CD4-positive, alpha-beta memory T cell (primary cell): ENCODE measurements at regions of chr7 and their contacts with region 1.

Region 1: DNA sequence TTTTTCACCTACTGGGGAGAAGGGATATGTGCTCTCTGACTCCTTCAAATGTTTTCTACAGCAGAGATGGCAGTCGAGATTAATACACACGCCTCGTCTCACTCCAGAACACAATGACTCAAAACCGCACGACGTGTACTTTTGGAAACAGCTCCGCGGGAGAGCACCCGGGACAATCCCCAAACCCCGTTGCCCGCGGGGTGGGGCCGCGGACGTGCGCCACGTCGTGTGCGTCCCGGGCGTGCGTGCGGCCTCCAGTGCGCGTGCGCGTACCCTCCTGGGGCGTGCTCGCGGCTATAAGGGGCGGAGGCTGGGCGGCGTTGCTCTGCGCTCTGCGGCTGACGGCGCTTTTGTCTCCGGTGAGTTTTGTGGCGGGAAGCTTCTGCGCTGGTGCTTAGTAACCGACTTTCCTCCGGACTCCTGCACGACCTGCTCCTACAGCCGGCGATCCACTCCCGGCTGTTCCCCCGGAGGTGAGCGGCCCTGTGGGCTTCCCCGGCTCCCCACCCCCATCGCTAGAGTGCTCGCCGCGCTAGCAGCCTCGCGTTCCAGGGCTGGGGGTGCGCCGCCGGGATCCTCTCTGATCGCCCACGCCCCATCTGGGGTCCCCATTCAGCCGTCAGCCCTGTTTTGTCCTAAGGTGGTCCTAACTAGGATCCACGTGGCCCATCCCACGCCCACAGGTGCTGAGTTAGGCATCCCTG is at the start of gene HILPDA:
- DNase-seq: peak; percentile 92 to 97 (median 94)
- H3K4me3 ChIP-seq: peak within 1 kb of the TSS; percentile 70 to 89
- H3K4me3 Mint-ChIP-seq: peak within 1 kb of the TSS; percentile 86 to 97 (median 94)
- H3K27ac ChIP-seq: peak within 1 kb of the TSS; percentile 76
- H3K27ac Mint-ChIP-seq: peak within 1 kb of the TSS; percentile 84 to 98 (median 96)
- H3K4me1 ChIP-seq: peaks cover 25% of the 10 kb centered on the region
- H3K4me1 Mint-ChIP-seq: peaks cover 17 to 30% (median 22%) of the 10 kb centered on the region in 4 donors
- H3K27me3 ChIP-seq: no peaks in the 10 kb centered on the region
- H3K27me3 Mint-ChIP-seq: no peaks in the 10 kb centered on the region
- total RNA-seq, gene HILPDA: 3.4 to 4.5 TPM

Region 2: DNA sequence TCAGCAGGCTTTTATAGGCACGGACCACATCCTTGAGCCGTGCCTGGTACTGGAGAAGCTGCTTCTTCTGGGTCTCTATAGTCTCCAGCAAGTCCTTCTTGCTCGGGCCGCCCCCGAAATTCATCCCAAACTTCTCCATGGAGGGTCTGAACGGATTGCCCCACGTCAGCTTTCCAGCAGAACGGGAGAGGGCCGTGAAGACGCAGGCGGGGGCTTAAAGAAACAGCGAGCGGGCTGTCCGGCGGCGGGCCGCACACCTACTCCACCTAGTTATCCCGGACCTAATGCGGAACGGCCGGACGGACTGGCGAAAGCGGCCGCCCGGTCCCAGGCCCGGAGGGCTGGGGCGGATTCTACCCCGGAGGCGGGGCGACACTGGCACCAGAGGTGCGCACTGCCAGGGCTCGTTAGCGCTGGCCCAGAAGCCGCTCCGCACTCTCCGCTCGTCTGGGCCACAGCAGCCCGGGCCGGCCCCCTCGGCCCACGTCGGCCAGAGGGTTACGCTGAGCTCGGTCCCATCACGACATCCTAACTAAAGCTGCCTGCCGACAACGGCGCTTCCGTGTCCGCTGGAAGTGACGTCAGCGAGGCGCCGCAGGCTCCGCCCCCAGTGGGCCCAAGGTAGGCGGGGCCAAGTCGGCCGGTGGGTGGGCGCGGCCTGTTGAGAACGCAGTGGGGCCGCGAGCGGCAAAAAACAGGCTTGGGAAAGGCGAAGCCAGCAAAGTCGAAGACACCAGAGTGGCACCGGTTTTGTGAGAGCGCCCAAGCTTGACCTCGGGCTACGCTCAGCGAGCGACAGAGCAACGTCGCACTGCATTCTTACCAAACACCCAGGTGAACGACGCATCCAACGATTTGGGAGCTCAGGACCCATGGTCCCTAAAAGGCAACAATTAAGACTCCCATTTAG is 870.4 kb before region 1 on chr7 and contains the start of gene GCC1:
- CTCF ChIA-PET with region 1: no interaction called
- POLR2A ChIA-PET with region 1: no interaction called
- intact Hi-C with region 1: loop called (anchors 5 kb)
- DNase-seq: peak; percentile 90 to 95 (median 91)
- H3K4me3 ChIP-seq: peak within 1 kb of the TSS; percentile 80 to 90
- H3K4me3 Mint-ChIP-seq: peak within 1 kb of the TSS; percentile 89 to 96 (median 92)
- H3K27ac ChIP-seq: peak within 1 kb of the TSS; percentile 89
- H3K27ac Mint-ChIP-seq: peak within 1 kb of the TSS; percentile 88 to 97 (median 95)
- H3K4me1 ChIP-seq: peaks cover 77% of the 10 kb centered on the region
- H3K4me1 Mint-ChIP-seq: peaks cover 41 to 87% (median 74%) of the 10 kb centered on the region in 4 donors
- H3K27me3 ChIP-seq: no peaks in the 10 kb centered on the region
- H3K27me3 Mint-ChIP-seq: no peaks in the 10 kb centered on the region
- total RNA-seq, gene GCC1: 29.1 to 30.0 TPM

Region 3: DNA sequence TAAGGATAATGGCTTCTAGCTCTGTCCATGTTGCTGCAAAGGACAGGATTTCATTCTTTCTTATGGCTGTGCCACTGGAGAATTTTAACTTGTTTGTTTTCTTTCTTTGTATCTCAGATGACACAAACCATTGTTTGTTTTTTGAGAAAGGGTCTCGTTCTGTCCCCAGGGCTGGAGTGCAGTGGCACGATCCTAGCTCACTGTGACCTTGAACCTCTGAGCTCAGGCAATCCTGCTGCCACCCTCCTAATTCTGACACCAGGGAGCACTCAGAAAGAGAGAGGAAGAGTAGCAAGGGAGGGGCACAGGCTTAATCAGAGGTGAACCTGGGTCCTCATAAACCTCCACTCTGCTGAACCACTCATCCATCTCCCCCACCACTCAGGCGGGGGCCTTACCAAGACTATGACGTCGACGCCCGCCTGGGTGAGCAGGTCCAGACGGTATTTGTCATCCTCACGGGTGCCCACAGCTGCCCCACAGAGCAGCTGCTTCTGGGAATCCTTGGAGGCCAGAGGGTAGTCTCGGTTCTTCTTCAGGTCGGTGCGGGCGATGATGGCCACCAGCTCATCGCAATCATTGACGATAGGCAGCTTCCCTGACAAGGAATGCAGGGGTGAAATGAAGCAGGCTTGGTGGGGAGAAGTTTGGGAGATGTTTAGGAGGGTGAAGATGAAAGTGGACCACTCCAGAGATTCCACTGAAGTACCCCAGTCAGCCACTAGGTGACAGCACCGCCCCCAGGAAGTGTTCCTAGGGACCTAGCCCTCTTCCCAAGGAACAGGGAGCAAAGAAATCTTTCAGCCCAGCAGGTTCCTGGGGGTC is 57.5 kb before region 1 on chr7:
- CTCF ChIA-PET with region 1: interaction called, 113 read pairs
- POLR2A ChIA-PET with region 1: no interaction called
- intact Hi-C with region 1: loop called (anchors 1 kb)
- DNase-seq: peak in 2 of 5 donors; percentile 14 to 32
- H3K4me3 ChIP-seq: no peak overlapping the region
- H3K4me3 Mint-ChIP-seq: no peak overlapping the region
- H3K27ac ChIP-seq: no peak overlapping the region
- H3K27ac Mint-ChIP-seq: no peak overlapping the region
- H3K4me1 ChIP-seq: no peaks in the 10 kb centered on the region
- H3K4me1 Mint-ChIP-seq: peaks cover 3 to 10% (median 5%) of the 10 kb centered on the region in 4 donors
- H3K27me3 ChIP-seq: no peaks in the 10 kb centered on the region
- H3K27me3 Mint-ChIP-seq: no peaks in the 10 kb centered on the region

Region 4: GRCh38 chr7:128415217-128415785 is 40.4 kb before region 1 on chr7:
- CTCF ChIA-PET with region 1: interaction called, 70 read pairs
- POLR2A ChIA-PET with region 1: interaction called, 10 read pairs
- intact Hi-C with region 1: no loop called
- DNase-seq: no peak
- H3K4me3 ChIP-seq: no peak overlapping the region
- H3K4me3 Mint-ChIP-seq: no peak overlapping the region
- H3K27ac ChIP-seq: no peak overlapping the region
- H3K27ac Mint-ChIP-seq: no peak overlapping the region
- H3K4me1 ChIP-seq: peaks cover 3% of the 10 kb centered on the region
- H3K4me1 Mint-ChIP-seq: peaks cover 2 to 3% (median 3%) of the 10 kb centered on the region in 4 donors
- H3K27me3 ChIP-seq: no peaks in the 10 kb centered on the region
- H3K27me3 Mint-ChIP-seq: peaks cover 0 to 3% of the 10 kb centered on the region in 2 donors

Region 5: DNA sequence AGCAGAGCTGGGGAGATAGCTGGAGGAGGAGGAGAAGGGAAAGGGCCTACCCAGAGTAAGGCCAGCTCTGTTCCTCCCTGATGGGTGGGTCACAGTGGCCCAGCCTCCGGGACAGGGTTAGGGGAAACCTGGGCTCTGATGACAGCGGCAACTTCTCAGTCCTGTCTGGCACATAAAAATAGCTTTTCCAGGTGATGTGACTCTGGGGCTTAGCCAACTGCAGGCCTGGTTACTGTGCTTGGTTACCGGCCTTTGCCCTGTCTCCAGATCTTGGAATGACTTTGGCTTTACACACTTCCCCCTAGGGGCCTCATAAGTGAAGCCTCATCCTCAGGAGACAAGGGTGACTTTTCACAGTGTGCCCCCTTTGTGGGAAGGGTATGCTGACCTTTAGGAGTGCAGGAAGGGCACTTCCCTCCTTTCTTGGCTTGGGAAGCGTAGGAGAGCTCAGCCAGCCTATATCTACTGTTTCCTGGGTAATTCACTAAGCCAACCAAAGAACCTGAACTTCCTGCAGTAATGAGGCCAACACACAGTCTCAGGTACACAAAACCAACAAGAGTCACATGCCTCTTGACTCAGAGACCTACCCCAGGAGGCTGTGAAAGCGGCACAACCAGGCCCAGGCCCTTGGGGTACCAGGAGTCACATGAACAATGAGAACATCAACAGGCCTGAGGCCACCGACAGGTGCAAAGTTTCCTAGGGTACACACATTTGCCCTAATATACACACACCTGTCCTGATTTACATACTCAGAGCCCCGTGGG is 11.7 kb before region 1 on chr7:
- CTCF ChIA-PET with region 1: interaction called, 30 read pairs
- POLR2A ChIA-PET with region 1: no interaction called
- intact Hi-C with region 1: no loop called
- DNase-seq: peak in 1 of 5 donors; percentile 35
- H3K4me3 ChIP-seq: no peak overlapping the region
- H3K4me3 Mint-ChIP-seq: no peak overlapping the region
- H3K27ac ChIP-seq: no peak overlapping the region
- H3K27ac Mint-ChIP-seq: no peak overlapping the region
- H3K4me1 ChIP-seq: no peaks in the 10 kb centered on the region
- H3K4me1 Mint-ChIP-seq: peaks cover 0 to 3% (median 0%) of the 10 kb centered on the region in 4 donors
- H3K27me3 ChIP-seq: no peaks in the 10 kb centered on the region
- H3K27me3 Mint-ChIP-seq: no peaks in the 10 kb centered on the region